ENCODE measurements at regions of chr1 and their contacts with region 1.

Region 1: GRCh38 chr1:206430031-206430983 is 40.0 kb upstream of the IKBKE start:
- DNase-seq: peak in 2 of 5 donors; percentile 29 to 59
- ATAC-seq: peak; percentile 51 to 91 (median 66)
- H3K4me3 ChIP-seq: no peak overlapping the region
- H3K27ac ChIP-seq: peak overlapping the region in 11 of 12 donors; percentile 11 to 60 (median 43)
- H3K4me1 ChIP-seq: peaks cover 0 to 23% (median 17%) of the 10 kb centered on the region in 12 donors
- H3K27me3 ChIP-seq: no peaks in the 10 kb centered on the region
- CTCF ChIP-seq: peak in 5 of 12 donors; percentile 7 to 34 (median 24)
- POLR2A ChIP-seq: no peak

Region 2: DNA sequence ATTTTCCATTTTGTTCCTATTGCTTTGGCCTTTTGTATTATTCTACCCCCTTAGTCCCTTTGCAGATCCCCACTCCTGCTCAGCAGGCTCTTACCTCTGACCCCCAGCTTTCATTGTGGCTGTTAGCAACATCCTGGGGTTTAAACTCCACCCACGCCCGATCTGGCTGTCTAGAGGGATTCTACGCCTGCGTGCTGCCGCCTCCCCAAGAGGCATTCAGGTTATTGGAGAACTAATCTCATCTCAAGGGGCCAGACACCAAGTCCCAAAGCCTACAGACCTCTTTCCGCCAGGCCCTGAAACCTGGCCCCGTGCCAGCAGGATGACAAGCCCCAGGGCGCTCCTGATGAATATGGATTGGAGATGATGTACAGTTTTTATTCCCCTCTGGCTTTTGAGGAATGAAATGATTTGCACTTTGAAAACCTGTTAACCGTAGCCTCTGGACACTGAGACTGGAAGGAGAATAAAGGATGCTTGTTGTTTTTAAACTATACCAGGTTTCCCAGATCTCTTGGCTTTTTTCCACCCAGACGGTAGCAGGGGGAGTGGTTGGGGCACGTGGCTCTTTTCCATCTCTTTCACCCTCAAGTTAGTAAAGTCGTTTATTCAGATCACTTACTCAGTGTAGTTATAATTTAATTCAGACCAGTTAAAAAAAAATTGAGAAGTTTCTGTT is 25.5 kb after region 1 on chr1:
- intact Hi-C with region 1: loop called in 1 of 10 experiments (anchors 2 kb)
- DNase-seq: peak in 1 of 5 donors; percentile 75
- ATAC-seq: peak in 1 of 4 donors; percentile 26
- H3K4me3 ChIP-seq: no peak overlapping the region
- H3K27ac ChIP-seq: peak overlapping the region in 1 of 12 donors; percentile 49
- H3K4me1 ChIP-seq: peaks cover 0 to 41% (median 24%) of the 10 kb centered on the region in 12 donors
- H3K27me3 ChIP-seq: no peaks in the 10 kb centered on the region
- CTCF ChIP-seq: no peak
- POLR2A ChIP-seq: no peak

Region 3: GRCh38 chr1:206544562-206545257 is 114.4 kb after region 1 on chr1:
- intact Hi-C with region 1: no loop called
- DNase-seq: peak; percentile 61 to 87 (median 69)
- ATAC-seq: peak; percentile 26 to 84 (median 72)
- H3K4me3 ChIP-seq: no peak overlapping the region
- H3K27ac ChIP-seq: no peak overlapping the region
- H3K4me1 ChIP-seq: peaks cover 0 to 14% (median 8%) of the 10 kb centered on the region in 12 donors
- H3K27me3 ChIP-seq: no peaks in the 10 kb centered on the region
- CTCF ChIP-seq: peak; percentile 80 to 92 (median 88)
- POLR2A ChIP-seq: no peak

Measured in heart left ventricle (tissue), 16 donors.